Esophagus muscularis mucosa (tissue), 4 donors: ENCODE measurements at regions of chrX and their contacts with region 1.

Region 1: GRCh38 chrX:123771449-123772064 is 38.7 kb upstream of the THOC2 start:
- DNase-seq: no peak
- H3K4me3 ChIP-seq: no peak overlapping the region
- H3K27ac ChIP-seq: no peak overlapping the region
- H3K4me1 ChIP-seq: no peaks in the 10 kb centered on the region
- H3K27me3 ChIP-seq: no peaks in the 10 kb centered on the region
- CTCF ChIP-seq: no peak
- EP300 ChIP-seq: no peak
- POLR2A ChIP-seq: no peak

Region 2: GRCh38 chrX:123698979-123699520 is 72.5 kb before region 1 on chrX:
- intact Hi-C with region 1: loop called (anchors 10 kb)
- DNase-seq: no peak
- H3K4me3 ChIP-seq: no peak overlapping the region
- H3K27ac ChIP-seq: no peak overlapping the region
- H3K4me1 ChIP-seq: peaks cover 0 to 8% (median 0%) of the 10 kb centered on the region in 4 donors
- H3K27me3 ChIP-seq: no peaks in the 10 kb centered on the region
- CTCF ChIP-seq: no peak
- EP300 ChIP-seq: no peak
- POLR2A ChIP-seq: no peak